Gastrocnemius medialis (tissue), 4 donors: ENCODE measurements at regions of chr3 and their contacts with region 1.

Region 1: DNA sequence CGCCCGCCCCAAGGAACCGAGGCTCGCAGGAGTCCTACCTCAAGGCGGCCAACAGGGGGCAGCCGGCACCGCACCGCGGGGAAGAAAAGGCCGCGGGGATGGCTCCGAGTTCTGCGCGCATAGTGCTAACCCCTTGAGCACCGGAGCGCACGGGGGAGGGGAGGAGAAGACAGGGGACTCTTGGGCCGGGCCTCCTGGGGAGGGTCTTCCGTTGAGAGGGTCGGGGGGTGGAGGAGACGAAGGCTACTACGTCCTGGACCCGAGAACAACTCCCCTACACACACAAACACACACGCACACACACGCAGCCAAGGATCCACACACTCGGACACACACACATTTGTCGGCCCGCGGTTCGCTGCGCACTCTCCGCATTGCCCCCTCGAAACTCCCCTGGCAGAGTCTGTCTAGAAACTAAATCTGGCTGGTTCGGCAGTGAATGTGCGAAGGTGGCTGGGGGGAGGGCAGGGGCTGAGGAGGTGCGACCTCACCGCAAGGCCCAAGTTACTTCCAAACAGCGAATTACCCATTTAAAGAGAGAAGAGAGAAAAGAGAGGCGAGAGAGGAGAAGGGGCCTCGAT is 1.8 kb downstream of the WNT5A start:
- DNase-seq: peak; percentile 65 to 66
- ATAC-seq: peak; percentile 53 to 69
- H3K4me3 ChIP-seq: peak overlapping the region; percentile 57 to 82 (median 68)
- H3K27ac ChIP-seq: peak overlapping the region; percentile 61 to 82 (median 77)
- H3K4me1 ChIP-seq: peaks cover 0 to 41% of the 10 kb centered on the region in 2 donors
- H3K27me3 ChIP-seq: peaks cover 4 to 13% (median 6%) of the 10 kb centered on the region in 3 donors
- CTCF ChIP-seq: peak in 4 of 5 experiments; percentile 19 to 93 (median 71)
- POLR2A ChIP-seq: no peak

Region 2: DNA sequence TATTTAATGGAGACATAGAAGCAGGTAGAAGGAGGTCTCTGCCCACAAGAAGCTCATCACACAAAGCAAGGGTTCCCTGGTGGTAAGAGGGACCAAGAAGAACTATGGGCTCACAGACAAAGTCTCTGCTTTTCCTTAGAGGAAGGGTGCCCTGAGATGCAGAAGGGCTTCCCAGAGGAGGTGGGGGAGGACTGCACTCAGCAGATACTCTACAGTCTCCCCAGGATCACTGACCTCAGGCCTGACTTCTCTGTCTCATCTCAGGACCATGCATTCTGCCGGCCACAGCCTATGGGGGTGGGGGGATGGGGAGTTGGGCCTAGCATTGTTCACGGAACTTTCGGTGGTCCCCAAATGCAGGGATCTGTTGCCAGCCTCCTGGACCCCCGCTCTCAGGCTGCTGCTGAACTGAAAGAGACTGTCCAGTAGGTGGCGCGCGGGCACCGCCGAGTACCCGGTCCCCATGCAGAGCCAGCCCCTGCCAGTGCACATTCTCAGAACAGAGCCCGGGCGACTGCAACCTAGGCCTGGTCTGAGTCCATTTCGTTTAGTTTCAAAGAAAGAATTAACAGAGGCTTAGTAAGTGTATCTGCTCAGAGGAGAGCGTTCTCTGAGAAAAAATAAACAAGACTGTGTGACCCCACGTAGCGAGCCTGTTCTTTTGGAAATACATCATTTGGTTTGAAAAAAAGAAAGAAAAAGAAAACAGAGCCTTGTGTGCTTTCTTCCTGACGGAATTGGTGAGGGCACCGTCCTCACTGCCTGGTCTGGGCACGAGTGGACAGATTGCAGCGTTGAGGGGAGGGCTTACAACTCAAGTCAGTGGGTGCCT is 631.5 kb before region 1 on chr3:
- in situ Hi-C with region 1: no loop called
- intact Hi-C with region 1: loop called (anchors 5 kb)
- DNase-seq: peak; percentile 47 to 55
- ATAC-seq: peak; percentile 70 to 75
- H3K4me3 ChIP-seq: no peak overlapping the region
- H3K27ac ChIP-seq: no peak overlapping the region
- H3K4me1 ChIP-seq: peaks cover 5 to 11% of the 10 kb centered on the region in 2 donors
- H3K27me3 ChIP-seq: no peaks in the 10 kb centered on the region
- CTCF ChIP-seq: peak; percentile 78 to 91 (median 87)
- POLR2A ChIP-seq: no peak

Region 3: DNA sequence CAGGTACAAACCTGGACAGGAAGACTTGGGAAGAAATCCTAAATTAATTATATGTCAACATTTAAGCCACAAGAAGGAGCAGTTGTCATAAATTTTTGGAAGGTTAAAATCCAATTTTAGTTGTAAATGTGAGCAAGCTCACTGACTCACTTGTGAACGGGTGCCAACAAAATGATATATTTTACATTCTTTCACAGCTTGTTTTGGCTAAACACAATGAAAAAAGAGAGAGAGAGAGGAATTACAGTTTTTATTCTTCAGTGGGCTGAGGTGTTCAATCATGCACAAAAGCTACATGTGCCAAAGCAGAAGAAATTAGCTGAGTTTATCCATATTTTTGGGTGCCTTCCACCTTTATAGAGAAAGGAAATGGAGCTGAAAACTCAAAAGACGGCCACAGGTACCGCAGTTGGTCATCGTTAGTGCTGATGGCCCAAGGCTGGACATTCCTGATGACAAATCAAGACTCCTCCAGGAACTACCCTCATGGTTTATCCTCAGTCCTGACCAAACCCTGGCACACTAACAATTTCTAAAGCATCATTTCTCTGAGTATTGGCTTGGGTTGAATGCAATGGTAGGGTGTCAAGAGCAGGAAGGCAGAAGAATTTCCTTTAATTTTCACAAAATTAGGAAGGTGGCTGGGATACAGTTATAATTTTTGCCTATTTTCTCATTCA is 39.4 kb after region 1 on chr3:
- in situ Hi-C with region 1: no loop called
- intact Hi-C with region 1: no loop called
- DNase-seq: no peak
- ATAC-seq: no peak
- H3K4me3 ChIP-seq: no peak overlapping the region
- H3K27ac ChIP-seq: no peak overlapping the region
- H3K4me1 ChIP-seq: no peaks in the 10 kb centered on the region
- H3K27me3 ChIP-seq: no peaks in the 10 kb centered on the region
- CTCF ChIP-seq: no peak
- POLR2A ChIP-seq: no peak

Region 4: DNA sequence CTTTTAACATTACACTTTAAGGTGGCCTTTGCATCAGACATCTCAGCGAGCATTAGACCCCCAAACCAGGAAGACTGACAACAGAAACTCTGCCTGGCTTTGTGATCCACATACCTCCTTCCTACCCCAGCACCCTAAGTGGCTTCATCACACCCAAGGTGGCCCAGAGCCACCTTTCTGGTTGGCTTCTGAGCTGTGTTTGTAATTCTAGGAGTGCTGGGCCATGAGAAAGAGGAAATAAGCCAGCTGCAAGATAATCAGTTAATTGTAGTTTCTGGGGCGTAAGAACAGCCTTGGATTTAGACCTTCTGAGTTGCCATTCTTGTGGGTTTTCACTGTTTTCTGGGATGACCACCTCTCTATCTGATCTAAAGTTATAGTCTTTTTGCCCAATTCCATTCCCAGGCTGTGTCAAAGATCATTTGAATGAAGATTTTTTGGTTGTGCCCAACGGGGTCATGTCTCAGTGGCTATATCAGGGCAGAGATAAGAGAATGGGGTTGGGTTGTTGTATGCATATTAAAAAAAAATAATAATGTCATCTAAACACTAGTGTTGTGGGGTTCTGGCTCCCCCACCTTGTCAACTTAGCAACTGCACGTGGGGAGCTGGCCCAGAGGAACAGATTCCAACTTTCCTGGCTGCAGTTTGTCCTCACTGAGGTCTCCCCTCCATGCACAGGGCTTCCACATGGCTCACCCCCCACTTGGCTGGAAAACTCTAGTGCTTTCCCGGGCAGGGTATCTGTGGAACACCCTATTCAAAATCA is 236.6 kb after region 1 on chr3:
- in situ Hi-C with region 1: loop called in 2 of 4 experiments (anchors 25 kb)
- intact Hi-C with region 1: loop called (anchors 1 kb)
- DNase-seq: no peak
- ATAC-seq: no peak
- H3K4me3 ChIP-seq: no peak overlapping the region
- H3K27ac ChIP-seq: no peak overlapping the region
- H3K4me1 ChIP-seq: no peaks in the 10 kb centered on the region
- H3K27me3 ChIP-seq: no peaks in the 10 kb centered on the region
- CTCF ChIP-seq: peak in 2 of 5 experiments; percentile 12 to 18
- POLR2A ChIP-seq: no peak

Region 5: GRCh38 chr3:56042326-56042951 is 557.1 kb after region 1 on chr3:
- in situ Hi-C with region 1: no loop called
- intact Hi-C with region 1: loop called (anchors 5 kb)
- DNase-seq: no peak
- ATAC-seq: no peak
- H3K4me3 ChIP-seq: no peak overlapping the region
- H3K27ac ChIP-seq: no peak overlapping the region
- H3K4me1 ChIP-seq: no peaks in the 10 kb centered on the region
- H3K27me3 ChIP-seq: no peaks in the 10 kb centered on the region
- CTCF ChIP-seq: peak in 2 of 5 experiments; percentile 17 to 27
- POLR2A ChIP-seq: no peak

Region 6: GRCh38 chr3:56251343-56251945 is 766.1 kb after region 1 on chr3:
- in situ Hi-C with region 1: loop called (anchors 10 to 25 kb)
- intact Hi-C with region 1: loop called (anchors 1 kb)
- DNase-seq: peak in 1 of 2 donors; percentile 12
- ATAC-seq: peak in 1 of 2 donors; percentile 46
- H3K4me3 ChIP-seq: no peak overlapping the region
- H3K27ac ChIP-seq: no peak overlapping the region
- H3K4me1 ChIP-seq: no peaks in the 10 kb centered on the region
- H3K27me3 ChIP-seq: no peaks in the 10 kb centered on the region
- CTCF ChIP-seq: peak; percentile 8 to 75 (median 60)
- POLR2A ChIP-seq: no peak